ENCODE measurements at regions of chr19 and their contacts with region 1.

Region 1: DNA sequence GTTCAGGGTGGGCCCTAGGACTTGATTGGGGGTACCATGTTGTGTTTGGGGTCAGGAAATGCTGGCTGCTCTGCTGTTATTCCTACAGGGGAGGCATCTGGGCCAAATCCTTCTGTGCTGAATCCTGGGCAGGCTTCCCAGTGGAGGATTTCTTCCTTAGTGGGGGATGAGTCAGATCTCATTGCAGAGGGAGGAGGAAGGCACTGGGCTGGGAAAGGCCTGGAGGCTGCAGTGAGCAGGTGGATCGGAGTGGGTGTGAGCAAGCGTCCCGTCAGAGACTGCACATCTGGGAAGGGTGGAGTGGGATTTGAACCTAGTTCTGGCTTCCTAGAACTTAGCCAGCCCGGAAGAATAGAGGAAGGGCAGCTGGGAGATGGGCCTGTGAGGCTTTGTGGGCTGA is 11.5 kb downstream of the CCDC124 start:
- DNase-seq: no peak
- ATAC-seq: no peak
- H3K4me3 ChIP-seq: no peak overlapping the region
- H3K27ac ChIP-seq: no peak overlapping the region
- H3K4me1 ChIP-seq: peaks cover 14% of the 10 kb centered on the region
- H3K27me3 ChIP-seq: no peaks in the 10 kb centered on the region
- CTCF ChIP-seq: no peak
- POLR2A ChIP-seq: no peak

Region 2: GRCh38 chr19:17985037-17985818 is 40.9 kb after region 1 on chr19:
- intact Hi-C with region 1: no loop called
- DNase-seq: no peak
- ATAC-seq: no peak
- H3K4me3 ChIP-seq: no peak overlapping the region
- H3K27ac ChIP-seq: no peak overlapping the region
- H3K4me1 ChIP-seq: no peaks in the 10 kb centered on the region
- H3K27me3 ChIP-seq: no peaks in the 10 kb centered on the region
- CTCF ChIP-seq: no peak
- POLR2A ChIP-seq: no peak

Region 3: DNA sequence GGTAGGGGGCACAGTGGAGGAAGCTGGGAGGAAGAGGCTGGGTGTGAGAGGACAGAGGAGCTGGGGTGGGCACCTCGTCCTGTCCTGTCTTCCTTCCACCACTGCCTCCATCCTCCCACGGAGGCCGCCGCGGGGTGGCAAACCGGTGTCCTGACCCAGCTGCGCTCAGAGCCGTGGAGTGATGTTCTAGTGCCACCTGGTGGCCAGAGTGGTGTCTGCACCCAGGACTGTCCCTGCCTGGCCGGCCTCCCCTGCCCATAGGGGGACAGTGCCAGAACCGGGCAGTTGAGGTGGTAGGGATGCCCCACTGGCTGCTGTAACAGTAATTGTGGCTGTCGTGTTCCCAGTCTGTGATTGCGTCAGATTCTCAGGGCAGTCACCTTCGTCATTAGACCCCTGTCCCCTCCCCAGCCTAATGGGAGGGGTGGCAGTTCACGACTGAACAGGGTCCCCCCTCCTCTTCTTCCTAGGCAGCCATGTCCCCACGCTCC is 52.6 kb after region 1 on chr19:
- intact Hi-C with region 1: loop called (anchors 5 kb)
- DNase-seq: peak; percentile 86 to 90 (median 88)
- ATAC-seq: peak; percentile 82
- H3K4me3 ChIP-seq: no peak overlapping the region
- H3K27ac ChIP-seq: no peak overlapping the region
- H3K4me1 ChIP-seq: peaks cover 9% of the 10 kb centered on the region
- H3K27me3 ChIP-seq: no peaks in the 10 kb centered on the region
- CTCF ChIP-seq: peak; percentile 97 to 99 (median 98)
- POLR2A ChIP-seq: no peak

Region 4: DNA sequence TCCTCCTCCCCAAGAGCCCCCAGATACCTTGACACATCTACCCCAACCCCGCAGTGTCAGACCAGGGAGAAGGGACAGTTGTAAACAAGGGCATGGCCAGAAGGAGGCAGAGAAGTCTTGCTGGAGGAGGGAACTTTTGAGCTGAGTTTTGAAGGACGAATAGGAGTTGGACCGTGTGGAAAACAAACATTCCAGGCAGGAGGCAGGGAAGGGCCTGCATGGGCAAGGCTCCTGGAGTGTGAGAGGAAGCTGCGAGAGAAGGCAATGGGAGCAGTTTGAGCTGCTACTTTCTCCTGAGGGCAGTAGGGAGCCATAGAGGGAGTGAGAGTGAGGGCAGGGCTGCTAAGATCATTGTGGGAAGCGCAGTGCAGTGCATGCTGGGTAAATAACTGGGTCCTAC is 119.2 kb after region 1 on chr19:
- intact Hi-C with region 1: loop called (anchors 5 kb)
- DNase-seq: no peak
- ATAC-seq: no peak
- H3K4me3 ChIP-seq: no peak overlapping the region
- H3K27ac ChIP-seq: no peak overlapping the region
- H3K4me1 ChIP-seq: peaks cover 3% of the 10 kb centered on the region
- H3K27me3 ChIP-seq: no peaks in the 10 kb centered on the region
- CTCF ChIP-seq: no peak
- POLR2A ChIP-seq: no peak

Measured in body of pancreas (tissue), 4 donors.